ENCODE measurements at regions of chr3 and their contacts with region 1.

Region 1: DNA sequence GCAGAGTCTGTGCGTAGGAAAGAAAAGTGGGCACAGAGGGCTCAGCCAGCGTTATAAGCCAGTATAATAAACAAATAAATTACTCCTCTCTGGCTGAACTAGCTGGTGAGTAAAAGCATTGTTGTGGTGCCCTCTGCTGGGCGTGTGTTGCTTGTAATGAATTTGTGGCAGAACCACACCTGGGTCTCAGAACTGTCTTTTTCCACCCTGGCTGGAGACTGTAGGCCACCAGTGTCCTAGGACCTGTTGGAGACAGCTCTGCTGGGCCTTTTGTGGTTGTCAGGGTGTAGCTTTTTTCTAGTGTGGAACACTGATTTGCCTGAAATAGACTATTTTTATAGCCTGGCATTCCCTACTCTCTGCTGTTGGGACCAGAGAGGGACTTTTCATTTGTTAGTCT is 130.5 kb upstream of the EIF1B start:
- DNase-seq: peak; percentile 45
- ATAC-seq: peak; percentile 89
- H3K4me3 ChIP-seq: no peak overlapping the region
- H3K27ac ChIP-seq: no peak overlapping the region
- H3K4me1 ChIP-seq: no peaks in the 10 kb centered on the region
- H3K27me3 ChIP-seq: no peaks in the 10 kb centered on the region
- CTCF ChIP-seq: peak; percentile 77
- EP300 ChIP-seq: no peak
- POLR2A ChIP-seq: no peak
- RAD21 ChIP-seq: peak; percentile 53; the same call in 1 of the 2 replicates

Region 2: DNA sequence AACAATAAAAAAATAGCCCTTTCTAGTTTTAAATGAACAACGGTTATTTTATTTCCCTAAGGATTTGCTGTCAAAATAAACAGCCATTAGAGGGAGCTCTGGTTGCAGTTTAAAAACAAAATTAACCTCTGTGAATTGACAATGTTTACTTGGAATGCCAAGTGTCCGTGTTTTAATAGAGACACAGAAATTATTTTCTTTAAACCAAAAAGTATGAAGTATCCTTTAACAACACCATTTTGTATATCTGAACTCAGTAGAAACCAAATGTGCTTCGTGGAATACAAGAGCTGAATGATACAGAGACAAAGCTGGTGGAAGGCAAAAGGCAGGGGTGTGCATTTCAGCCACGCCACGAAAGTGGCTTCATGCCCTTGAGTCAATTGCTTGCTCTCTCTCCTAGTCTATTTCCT is 637.1 kb before region 1 on chr3:
- CTCF ChIA-PET with region 1: no interaction called
- POLR2A ChIA-PET with region 1: no interaction called
- in situ Hi-C with region 1: no loop called
- intact Hi-C with region 1: loop called (anchors 5 kb)
- DNase-seq: no peak
- ATAC-seq: no peak
- H3K4me3 ChIP-seq: no peak overlapping the region
- H3K27ac ChIP-seq: no peak overlapping the region
- H3K4me1 ChIP-seq: no peaks in the 10 kb centered on the region
- H3K27me3 ChIP-seq: no peaks in the 10 kb centered on the region; a peak in 1 of 5 replicates
- CTCF ChIP-seq: peak; percentile 33
- EP300 ChIP-seq: no peak
- POLR2A ChIP-seq: no peak
- RAD21 ChIP-seq: no peak

Region 3: GRCh38 chr3:39668420-39668819 is 510.6 kb before region 1 on chr3:
- CTCF ChIA-PET with region 1: interaction called, 4 read pairs
- POLR2A ChIA-PET with region 1: no interaction called
- in situ Hi-C with region 1: no loop called
- intact Hi-C with region 1: loop called (anchors 2 kb)
- DNase-seq: peak; percentile 38
- ATAC-seq: peak; percentile 67
- H3K4me3 ChIP-seq: no peak overlapping the region
- H3K27ac ChIP-seq: no peak overlapping the region
- H3K4me1 ChIP-seq: no peaks in the 10 kb centered on the region
- H3K27me3 ChIP-seq: no peaks in the 10 kb centered on the region; a peak in 1 of 5 replicates
- CTCF ChIP-seq: peak; percentile 64
- EP300 ChIP-seq: no peak
- POLR2A ChIP-seq: no peak
- RAD21 ChIP-seq: no peak

Region 4: DNA sequence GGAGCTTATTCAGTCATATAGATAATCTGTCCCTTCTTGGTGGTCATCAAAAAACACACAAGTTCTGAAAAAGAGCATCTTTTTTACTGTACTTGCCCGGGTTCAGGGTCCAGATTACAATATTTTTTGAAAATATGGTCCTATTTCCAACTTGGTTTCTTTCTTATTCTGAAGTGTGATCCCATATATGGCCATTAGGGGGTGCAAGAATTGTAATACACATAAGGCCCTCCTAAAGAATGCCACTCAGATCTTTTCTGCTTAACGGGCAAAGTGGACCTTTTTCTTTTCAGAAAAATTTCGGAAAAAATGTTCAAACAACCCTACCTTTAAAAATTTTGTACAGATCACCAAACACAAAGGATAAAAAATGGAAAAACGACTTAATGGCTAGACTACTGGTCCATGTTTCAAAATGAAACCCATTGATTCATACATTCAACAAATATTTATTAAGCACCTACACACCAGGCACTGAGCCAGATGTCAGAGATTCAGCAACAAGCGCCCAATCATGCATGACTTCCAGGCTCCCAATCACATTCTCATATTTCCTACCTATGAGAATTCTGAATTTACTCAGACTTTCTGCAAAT is 471.6 kb before region 1 on chr3:
- CTCF ChIA-PET with region 1: no interaction called
- POLR2A ChIA-PET with region 1: no interaction called
- in situ Hi-C with region 1: loop called (anchors 25 kb)
- intact Hi-C with region 1: loop called (anchors 1 kb)
- DNase-seq: peak; percentile 13
- ATAC-seq: peak; percentile 57
- H3K4me3 ChIP-seq: no peak overlapping the region
- H3K27ac ChIP-seq: no peak overlapping the region
- H3K4me1 ChIP-seq: no peaks in the 10 kb centered on the region
- H3K27me3 ChIP-seq: no peaks in the 10 kb centered on the region
- CTCF ChIP-seq: peak; percentile 62
- EP300 ChIP-seq: no peak
- POLR2A ChIP-seq: no peak
- RAD21 ChIP-seq: no peak

Region 5: DNA sequence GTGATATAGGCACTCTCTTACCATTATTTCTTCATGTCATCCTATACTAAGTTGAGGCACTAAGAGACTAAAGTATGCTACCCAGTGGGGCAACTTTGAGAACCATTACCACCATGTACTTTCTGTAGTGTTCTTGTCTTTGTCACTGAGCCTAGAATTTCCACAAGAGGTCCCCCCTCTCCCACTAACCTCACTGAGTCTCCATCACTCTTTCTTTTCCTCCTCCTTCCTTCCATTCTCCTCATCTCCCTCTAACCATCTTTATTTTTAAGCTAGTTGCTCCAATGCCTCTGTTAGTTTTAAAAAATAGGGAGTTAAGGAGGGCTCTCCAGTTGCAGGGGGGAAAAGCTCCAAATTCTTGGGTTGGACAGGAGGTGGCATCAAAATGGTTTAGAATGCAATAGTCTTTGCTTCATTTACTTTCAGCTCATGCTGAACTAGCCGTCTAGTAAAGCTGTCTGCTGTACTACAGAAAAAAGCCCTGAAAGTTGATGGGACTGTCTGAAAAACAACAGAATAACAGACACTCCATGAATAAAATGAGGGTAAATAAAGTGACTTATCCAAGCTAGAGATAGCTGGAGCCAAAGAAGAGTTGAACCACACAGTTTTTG is 454.7 kb before region 1 on chr3:
- CTCF ChIA-PET with region 1: no interaction called
- POLR2A ChIA-PET with region 1: no interaction called
- in situ Hi-C with region 1: loop called (anchors 25 kb)
- intact Hi-C with region 1: loop called (anchors 5 kb)
- DNase-seq: no peak
- ATAC-seq: 0 out of 3 replicates have a peak, but pooled peaks have one; percentile 31
- H3K4me3 ChIP-seq: no peak overlapping the region
- H3K27ac ChIP-seq: no peak overlapping the region
- H3K4me1 ChIP-seq: no peaks in the 10 kb centered on the region
- H3K27me3 ChIP-seq: no peaks in the 10 kb centered on the region; a peak in 1 of 5 replicates
- CTCF ChIP-seq: peak; percentile 60
- EP300 ChIP-seq: no peak
- POLR2A ChIP-seq: no peak
- RAD21 ChIP-seq: no peak

Region 6: GRCh38 chr3:39812537-39812936 is 366.5 kb before region 1 on chr3:
- CTCF ChIA-PET with region 1: no interaction called
- POLR2A ChIA-PET with region 1: no interaction called
- in situ Hi-C with region 1: no loop called
- intact Hi-C with region 1: loop called (anchors 10 kb)
- DNase-seq: peak; percentile 6
- ATAC-seq: no peak
- H3K4me3 ChIP-seq: no peak overlapping the region
- H3K27ac ChIP-seq: no peak overlapping the region
- H3K4me1 ChIP-seq: peaks cover 19% of the 10 kb centered on the region
- H3K27me3 ChIP-seq: peaks cover 7 to 31% of the 10 kb centered on the region in 2 experiments; a peak in 4 of 5 replicates
- CTCF ChIP-seq: peak; percentile 47
- EP300 ChIP-seq: no peak
- POLR2A ChIP-seq: no peak
- RAD21 ChIP-seq: no peak

Measured in HepG2 (cell line).